AG04449 (cell line): ENCODE measurements at regions of chr6 and their contacts with region 1.

Region 1: GRCh38 chr6:132279592-132280139 is 121.6 kb downstream of the MOXD1 start:
- DNase-seq: no peak
- H3K4me3 ChIP-seq: peak overlapping the region; percentile 56
- CTCF ChIP-seq: peak; percentile 62

Region 2: DNA sequence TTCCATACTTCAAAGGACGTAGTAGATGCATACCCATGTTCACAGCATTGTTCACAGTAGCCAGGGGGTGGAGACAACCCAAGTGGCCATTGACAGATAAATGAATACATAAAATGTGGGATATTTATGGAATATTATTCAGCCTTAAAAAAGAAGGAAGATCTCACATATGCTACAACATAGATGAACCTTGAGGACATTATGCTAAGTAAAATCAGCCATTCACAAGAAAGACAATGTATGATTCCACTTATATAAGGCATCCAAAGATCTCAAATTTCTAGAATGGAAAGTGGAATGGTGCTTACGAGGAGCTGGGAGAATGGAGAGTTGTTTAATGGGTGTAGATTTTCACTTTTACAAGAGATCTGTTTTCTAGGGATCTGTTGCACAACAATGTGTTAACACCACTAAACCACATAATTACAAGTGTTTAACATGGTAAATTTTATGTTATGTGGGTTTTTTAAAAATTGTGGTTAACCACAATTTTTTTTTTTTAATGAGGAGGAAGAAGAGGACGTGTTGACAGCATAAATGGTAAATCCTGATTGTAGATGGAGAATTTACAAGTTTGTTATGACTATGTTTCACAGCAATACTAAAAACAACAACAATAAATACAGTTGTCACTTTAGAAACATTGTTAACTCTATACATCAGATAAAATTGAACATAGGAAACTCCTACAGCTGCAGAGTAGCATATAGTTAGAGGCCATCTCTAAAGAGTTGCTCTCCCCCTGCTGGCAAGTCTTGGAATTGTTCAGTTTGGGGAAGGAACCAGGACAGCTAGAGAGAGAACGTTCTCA is 370.1 kb before region 1 on chr6:
- CTCF ChIA-PET with region 1: interaction called, 154 read pairs
- POLR2A ChIA-PET with region 1: no interaction called
- DNase-seq: no peak
- H3K4me3 ChIP-seq: no peak overlapping the region
- CTCF ChIP-seq: peak; percentile 83

Region 3: DNA sequence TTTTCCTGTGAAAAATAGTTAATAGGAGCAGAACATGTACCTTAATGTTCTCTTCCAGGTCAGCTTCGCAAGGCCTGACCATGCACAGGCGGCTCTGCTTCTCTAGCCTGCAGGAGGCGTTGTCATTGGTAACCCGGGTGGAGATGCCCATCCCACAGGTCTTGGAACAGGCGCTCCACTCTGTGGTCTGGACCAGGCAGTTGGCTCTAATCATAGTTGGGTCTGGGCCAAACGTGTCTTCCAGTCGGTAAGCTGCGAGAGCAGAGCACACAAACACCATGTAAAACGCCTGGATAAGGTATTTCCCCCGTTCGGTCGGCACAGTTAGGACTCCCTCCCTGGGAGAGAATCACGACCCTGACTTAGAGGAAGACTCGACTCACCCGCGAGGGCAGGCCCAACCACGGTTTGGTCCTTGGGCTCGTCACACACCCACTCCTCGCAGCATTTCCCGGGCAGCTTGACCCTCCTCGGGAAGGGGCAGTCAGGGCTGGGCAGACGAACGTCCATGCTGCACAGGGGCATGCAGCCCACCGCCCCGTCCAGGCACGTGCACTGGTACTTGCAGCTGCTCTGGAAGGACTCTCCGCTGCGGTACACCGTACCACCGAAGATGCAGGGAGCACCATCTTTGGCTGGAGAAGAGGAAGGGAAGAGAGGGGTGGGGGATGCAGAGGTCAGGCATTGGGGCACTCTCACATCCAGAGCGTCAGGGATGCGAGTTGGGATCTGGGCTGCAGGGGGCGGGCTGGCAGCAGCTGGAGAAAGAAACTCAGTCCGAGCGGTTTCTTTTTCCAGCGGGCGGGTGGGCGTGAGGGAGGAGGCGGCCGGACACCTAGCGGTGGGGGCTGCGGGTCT is 329.5 kb before region 1 on chr6:
- CTCF ChIA-PET with region 1: interaction called, 10 read pairs
- POLR2A ChIA-PET with region 1: interaction called, 3 read pairs
- DNase-seq: peak; percentile 79
- H3K4me3 ChIP-seq: peak overlapping the region; percentile 97
- CTCF ChIP-seq: peak; percentile 51

Region 4: DNA sequence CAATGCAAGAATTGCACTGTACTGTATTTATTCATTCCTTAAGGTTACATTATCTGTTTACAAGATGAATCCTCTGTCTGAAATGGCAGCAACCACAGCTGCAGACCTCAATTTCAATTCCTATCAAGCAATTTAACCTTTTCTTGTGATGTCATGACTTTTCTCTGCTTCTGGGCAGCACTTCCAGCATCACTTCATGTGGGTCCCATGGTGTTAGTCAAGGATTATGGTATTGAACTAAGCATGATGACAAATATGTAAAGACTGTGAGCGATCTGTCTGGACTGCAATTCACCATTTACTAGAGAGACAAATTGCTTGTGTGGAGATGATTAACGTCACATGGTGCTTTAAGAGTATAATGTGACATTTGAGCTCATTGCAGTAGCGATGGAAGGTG is 238.0 kb before region 1 on chr6:
- CTCF ChIA-PET with region 1: no interaction called
- POLR2A ChIA-PET with region 1: no interaction called
- DNase-seq: peak; percentile 54
- H3K4me3 ChIP-seq: no peak overlapping the region
- CTCF ChIP-seq: no peak

Region 5: GRCh38 chr6:132259070-132259469 is 20.6 kb before region 1 on chr6:
- CTCF ChIA-PET with region 1: interaction called, 76 read pairs
- POLR2A ChIA-PET with region 1: no interaction called
- DNase-seq: no peak
- H3K4me3 ChIP-seq: no peak overlapping the region
- CTCF ChIP-seq: peak; percentile 19

Region 6: GRCh38 chr6:132391391-132392271 is 112.0 kb after region 1 on chr6:
- CTCF ChIA-PET with region 1: interaction called, 10 read pairs
- POLR2A ChIA-PET with region 1: no interaction called
- DNase-seq: peak; percentile 78
- H3K4me3 ChIP-seq: peak overlapping the region; percentile 38
- CTCF ChIP-seq: no peak

Region 7: DNA sequence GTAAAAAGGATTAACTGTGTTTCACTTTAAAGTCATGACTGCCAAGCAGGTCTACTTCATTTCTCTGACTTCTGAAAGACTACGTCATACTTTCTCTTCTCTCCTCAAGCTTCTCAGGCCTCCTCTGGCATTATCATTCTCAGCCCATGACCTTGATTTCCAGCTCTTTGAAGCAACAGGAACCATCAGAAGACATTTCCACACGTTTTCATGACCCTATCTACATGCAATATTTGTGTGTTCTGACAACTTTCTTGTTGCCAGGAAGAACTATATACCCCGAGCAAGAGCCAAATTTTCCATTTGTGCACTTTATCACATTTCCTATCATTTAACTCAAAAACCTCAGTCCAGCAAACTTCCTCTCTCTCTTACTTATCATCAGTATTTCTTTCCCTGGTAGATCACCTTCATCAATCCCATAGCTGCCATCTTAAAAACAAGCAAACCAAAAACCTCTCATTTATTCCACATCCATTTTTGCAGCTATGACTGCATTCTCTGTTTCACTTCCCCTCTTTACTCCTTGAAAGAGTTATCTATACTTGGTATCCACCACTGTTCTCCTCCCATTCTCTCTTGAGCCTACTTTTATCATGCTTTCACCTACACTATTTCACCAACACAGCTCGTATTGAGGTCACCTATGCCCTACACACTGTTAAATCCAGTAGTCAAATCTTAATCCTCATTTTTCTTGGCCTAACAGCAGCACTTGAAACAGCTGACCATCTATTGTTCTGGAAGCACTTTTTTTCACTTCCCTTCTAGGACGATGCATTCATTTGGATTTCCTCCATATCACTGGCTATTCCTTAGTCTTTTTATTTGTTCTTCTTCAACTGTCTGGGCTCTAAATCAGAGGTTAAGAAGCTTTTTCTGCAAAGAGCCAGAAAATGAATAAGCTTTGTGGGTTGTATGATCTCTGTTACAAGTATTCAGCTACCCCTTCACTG is 186.1 kb after region 1 on chr6:
- CTCF ChIA-PET with region 1: interaction called, 19 read pairs
- POLR2A ChIA-PET with region 1: no interaction called
- DNase-seq: no peak
- H3K4me3 ChIP-seq: no peak overlapping the region
- CTCF ChIP-seq: no peak

Region 8: DNA sequence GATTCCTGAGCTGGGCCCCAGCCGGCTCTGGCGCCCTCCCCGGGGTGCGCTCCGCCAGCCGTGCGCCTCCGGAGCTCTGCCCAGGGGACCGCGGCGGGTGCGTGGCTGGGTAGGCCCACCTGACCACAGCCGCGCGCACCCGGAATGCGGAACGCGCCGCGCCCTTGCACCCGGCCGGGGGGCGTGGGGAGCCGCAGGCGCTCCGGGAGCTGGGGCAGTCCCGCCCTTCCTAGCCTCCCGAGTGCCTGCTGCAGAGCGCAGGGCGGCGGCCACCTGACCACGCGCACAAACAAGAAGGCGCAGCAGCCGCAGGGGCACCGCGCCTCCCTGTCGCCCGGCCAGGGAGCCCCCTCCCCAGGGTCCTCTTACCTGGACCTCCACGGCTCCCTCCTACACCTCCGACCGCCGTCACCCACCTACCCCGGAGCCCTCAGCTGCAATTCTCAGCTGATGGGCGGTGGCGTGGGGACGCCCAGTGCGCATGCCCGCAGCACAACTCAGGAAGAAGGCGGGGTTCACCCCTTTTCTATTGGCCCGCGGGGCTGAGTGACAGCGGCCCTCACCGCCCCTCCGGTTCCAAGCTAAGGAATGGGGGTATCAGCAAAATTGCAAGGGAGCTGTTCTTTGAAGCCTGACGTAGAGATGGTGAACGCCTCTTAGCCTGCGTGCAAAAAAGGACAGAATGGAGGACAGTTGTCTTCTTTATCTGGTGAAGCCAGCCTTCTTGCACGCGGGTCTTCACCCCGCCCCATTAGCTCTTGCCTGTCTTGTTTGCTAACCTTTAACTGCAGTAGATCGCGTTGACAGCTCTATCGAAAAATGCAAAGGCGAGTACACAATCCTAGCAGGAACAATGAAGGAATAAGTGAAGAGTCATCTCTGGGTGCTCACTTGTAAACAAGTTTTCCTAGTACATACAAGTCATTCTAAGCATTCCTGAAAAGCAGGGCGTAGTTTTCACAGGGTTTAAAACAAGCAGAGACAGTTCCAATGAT is 233.3 kb after region 1 on chr6 and contains the start of gene STX7:
- CTCF ChIA-PET with region 1: interaction called, 11 read pairs
- POLR2A ChIA-PET with region 1: no interaction called
- DNase-seq: no peak
- H3K4me3 ChIP-seq: peak within 1 kb of the TSS; percentile 81
- CTCF ChIP-seq: no peak